ENCODE measurements at regions of chr11 and their contacts with region 1.

Region 1: GRCh38 chr11:128630367-128631230 is 43.2 kb upstream of the ETS1 start:
- DNase-seq: peak; percentile 74
- CTCF ChIP-seq: peak; percentile 85

Region 2: GRCh38 chr11:128039140-128040021 is 591.2 kb before region 1 on chr11:
- in situ Hi-C with region 1: loop called (anchors 25 kb)
- DNase-seq: no peak
- CTCF ChIP-seq: no peak

Region 3: DNA sequence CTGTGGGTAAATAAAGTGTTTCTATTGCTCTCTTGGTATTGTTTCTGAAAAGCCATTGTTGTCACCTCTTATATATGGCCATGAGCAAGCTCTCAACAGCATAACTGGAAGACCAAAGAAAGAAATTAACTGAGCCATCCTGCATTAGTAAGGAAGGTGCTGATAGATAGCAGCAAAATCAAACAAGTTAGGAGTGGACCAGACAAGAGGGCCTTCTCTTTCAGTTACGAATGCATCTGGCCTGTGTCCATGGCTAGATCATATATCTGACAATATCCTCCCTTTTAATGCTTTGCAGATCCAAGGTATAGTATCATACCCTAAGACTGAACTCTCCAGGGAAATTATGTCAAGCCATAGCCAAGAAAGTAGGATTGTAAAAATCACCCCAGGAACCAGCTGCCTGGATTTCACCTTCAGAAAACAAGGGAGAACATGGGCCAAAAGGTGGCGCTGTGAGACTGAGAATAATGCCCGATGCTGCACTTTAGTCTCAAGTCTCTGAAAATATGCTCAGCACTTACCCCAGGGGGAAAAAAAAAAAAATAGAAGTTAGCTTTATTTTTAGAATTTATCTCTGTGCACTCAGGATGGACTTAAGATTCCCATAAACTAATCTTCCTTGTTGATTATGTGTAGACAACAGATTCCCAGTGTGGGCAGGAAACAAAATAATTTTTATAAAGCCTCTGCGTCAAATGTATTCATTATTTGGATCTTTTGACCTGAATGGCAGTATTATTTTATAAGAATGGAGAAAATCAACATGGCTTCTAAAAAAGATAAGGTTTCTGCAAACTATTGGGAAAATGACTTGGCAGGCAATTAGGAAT is 458.3 kb before region 1 on chr11:
- in situ Hi-C with region 1: loop called (anchors 10 kb)
- DNase-seq: peak; percentile 72
- CTCF ChIP-seq: peak; percentile 82

Region 4: GRCh38 chr11:128831174-128832120 is 200.8 kb after region 1 on chr11:
- in situ Hi-C with region 1: loop called (anchors 25 kb)
- DNase-seq: peak; percentile 70
- CTCF ChIP-seq: peak; percentile 91

Measured in GM13977 (cell line).